Endothelial cell of umbilical vein (primary cell): ENCODE measurements at regions of chr12 and their contacts with region 1.

Region 1: DNA sequence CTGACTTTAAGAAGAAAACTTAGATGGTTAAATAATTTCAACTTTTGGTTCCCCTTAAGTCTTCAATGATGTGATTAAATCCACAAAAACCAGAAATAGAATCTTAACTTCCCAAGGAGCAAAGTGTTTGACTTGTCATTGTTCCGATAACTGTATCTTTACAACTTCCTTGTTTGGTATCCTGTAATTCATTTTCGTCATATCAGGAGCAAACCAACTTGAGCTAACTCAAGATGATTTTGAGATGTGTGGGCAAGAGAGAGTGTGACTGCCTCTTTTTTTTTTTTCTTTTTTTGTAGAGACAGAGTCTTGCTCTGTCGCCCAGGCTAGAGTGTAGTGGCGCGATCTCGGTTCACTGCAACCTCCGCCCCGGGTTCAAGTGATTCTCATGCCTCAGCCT is 25.3 kb downstream of the DRAM1 start:
- DNase-seq: peak; percentile 71
- H3K4me3 ChIP-seq: no peak overlapping the region
- H3K27ac ChIP-seq: peak overlapping the region; percentile 0
- H3K4me1 ChIP-seq: peaks cover 9% of the 10 kb centered on the region
- H3K27me3 ChIP-seq: no peaks in the 10 kb centered on the region
- CTCF ChIP-seq: no peak
- POLR2A ChIP-seq: no peak

Region 2: GRCh38 chr12:101891462-101892273 is 11.0 kb before region 1 on chr12:
- CTCF ChIA-PET with region 1: interaction called, 4 read pairs
- POLR2A ChIA-PET with region 1: interaction called, 3 read pairs
- dilution Hi-C with region 1: no loop called
- intact Hi-C with region 1: loop called (anchors 1 kb)
- DNase-seq: peak; percentile 95
- H3K4me3 ChIP-seq: peak overlapping the region in 1 of 3 experiments; percentile 31
- H3K27ac ChIP-seq: peak overlapping the region; percentile 56
- H3K4me1 ChIP-seq: peaks cover 40% of the 10 kb centered on the region
- H3K27me3 ChIP-seq: no peaks in the 10 kb centered on the region
- CTCF ChIP-seq: no peak
- POLR2A ChIP-seq: no peak